ENCODE measurements at regions of chr5 and their contacts with region 1.

Region 1: GRCh38 chr5:141564216-141564692 is 54.5 kb downstream of the DIAPH1 start:
- DNase-seq: peak; percentile 41 to 89
- H3K4me3 ChIP-seq: no peak overlapping the region
- H3K27ac ChIP-seq: peak overlapping the region; percentile 85
- H3K4me1 ChIP-seq: peaks cover 5% of the 10 kb centered on the region; the same call in 1 of the 2 replicates
- H3K27me3 ChIP-seq: no peaks in the 10 kb centered on the region
- CTCF ChIP-seq: peak; percentile 97

Region 2: GRCh38 chr5:141223112-141223783 is 341.0 kb before region 1 on chr5 and contains the start of gene PCDHB14:
- CTCF ChIA-PET with region 1: interaction called, 4 read pairs
- POLR2A ChIA-PET with region 1: no interaction called
- intact Hi-C with region 1: loop called (anchors 2 kb)
- DNase-seq: peak in 1 of 2 experiments; percentile 9
- H3K4me3 ChIP-seq: peak within 1 kb of the TSS; percentile 52
- H3K27ac ChIP-seq: no peak within 1 kb of the TSS
- H3K4me1 ChIP-seq: no peaks in the 10 kb centered on the region
- H3K27me3 ChIP-seq: no peaks in the 10 kb centered on the region
- CTCF ChIP-seq: peak; percentile 66
- total RNA-seq, gene PCDHB14: 0.07 TPM in 1 of 2 replicates, not detected in the other

Region 3: GRCh38 chr5:141349917-141350619 is 214.2 kb before region 1 on chr5 and contains the start of gene PCDHGB1:
- CTCF ChIA-PET with region 1: no interaction called
- POLR2A ChIA-PET with region 1: no interaction called
- intact Hi-C with region 1: loop called (anchors 5 kb)
- DNase-seq: peak in 1 of 2 experiments; percentile 33
- H3K4me3 ChIP-seq: no peak within 1 kb of the TSS
- H3K27ac ChIP-seq: no peak within 1 kb of the TSS
- H3K4me1 ChIP-seq: no peaks in the 10 kb centered on the region
- H3K27me3 ChIP-seq: no peaks in the 10 kb centered on the region
- CTCF ChIP-seq: peak; percentile 44
- total RNA-seq, gene PCDHGB1: not detected in 2 replicates

Region 4: GRCh38 chr5:141524604-141525597 is 39.4 kb before region 1 on chr5:
- CTCF ChIA-PET with region 1: interaction called, 6 read pairs
- POLR2A ChIA-PET with region 1: no interaction called
- intact Hi-C with region 1: loop called (anchors 2 kb)
- DNase-seq: peak; percentile 77 to 78
- H3K4me3 ChIP-seq: no peak overlapping the region
- H3K27ac ChIP-seq: no peak overlapping the region
- H3K4me1 ChIP-seq: peaks cover 38% of the 10 kb centered on the region
- H3K27me3 ChIP-seq: no peaks in the 10 kb centered on the region
- CTCF ChIP-seq: peak; percentile 97

Region 5: DNA sequence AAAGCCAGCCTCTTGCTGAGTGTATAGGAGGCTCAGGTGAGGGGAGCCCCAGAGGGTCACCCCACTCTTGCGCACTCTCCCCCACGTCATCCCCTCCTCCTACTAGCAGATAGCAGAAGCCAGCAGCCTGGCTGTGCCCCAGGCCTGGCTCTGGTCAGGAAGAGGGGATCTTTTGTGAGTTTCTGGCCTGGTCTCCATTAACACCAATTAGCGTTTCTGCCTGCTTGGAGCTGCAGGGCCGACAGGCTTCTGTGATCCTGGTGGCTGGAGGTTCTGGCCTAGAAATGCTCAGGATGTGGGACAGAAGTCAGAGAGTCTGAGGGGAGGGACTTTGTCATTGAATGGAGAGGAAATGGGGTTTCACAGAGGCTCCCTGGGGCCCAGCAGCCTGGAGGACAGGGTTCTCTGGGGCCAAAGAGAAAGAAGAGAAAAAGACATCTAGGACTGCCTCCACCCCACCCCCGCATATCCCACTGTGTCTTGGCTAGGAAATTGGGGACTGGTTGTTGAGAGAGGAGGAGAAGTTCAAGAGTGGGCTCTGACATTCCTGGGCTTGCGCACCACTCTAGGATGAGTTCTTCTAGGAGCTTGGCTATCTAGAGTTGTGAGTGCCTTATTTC is 165.2 kb after region 1 on chr5:
- CTCF ChIA-PET with region 1: no interaction called
- POLR2A ChIA-PET with region 1: no interaction called
- intact Hi-C with region 1: no loop called
- DNase-seq: no peak
- H3K4me3 ChIP-seq: no peak overlapping the region
- H3K27ac ChIP-seq: no peak overlapping the region
- H3K4me1 ChIP-seq: peaks cover 6% of the 10 kb centered on the region; the same call in 1 of the 2 replicates
- H3K27me3 ChIP-seq: no peaks in the 10 kb centered on the region
- CTCF ChIP-seq: no peak